ENCODE measurements at regions of chr1 and their contacts with region 1.

Region 1: GRCh38 chr1:194295685-194296084 is 1109.3 kb upstream of the B3GALT2 start:
- DNase-seq: no peak
- ATAC-seq: peak; percentile 64

Region 2: GRCh38 chr1:193143285-193143684 is 1152.4 kb before region 1 on chr1:
- intact Hi-C with region 1: loop called (anchors 10 kb)
- DNase-seq: no peak
- ATAC-seq: no peak

Region 3: GRCh38 chr1:193406901-193407300 is 888.8 kb before region 1 on chr1:
- intact Hi-C with region 1: loop called (anchors 10 kb)
- DNase-seq: no peak
- ATAC-seq: no peak

Region 4: GRCh38 chr1:193498088-193498655 is 797.5 kb before region 1 on chr1:
- intact Hi-C with region 1: no loop called
- DNase-seq: no peak
- ATAC-seq: no peak

Region 5: DNA sequence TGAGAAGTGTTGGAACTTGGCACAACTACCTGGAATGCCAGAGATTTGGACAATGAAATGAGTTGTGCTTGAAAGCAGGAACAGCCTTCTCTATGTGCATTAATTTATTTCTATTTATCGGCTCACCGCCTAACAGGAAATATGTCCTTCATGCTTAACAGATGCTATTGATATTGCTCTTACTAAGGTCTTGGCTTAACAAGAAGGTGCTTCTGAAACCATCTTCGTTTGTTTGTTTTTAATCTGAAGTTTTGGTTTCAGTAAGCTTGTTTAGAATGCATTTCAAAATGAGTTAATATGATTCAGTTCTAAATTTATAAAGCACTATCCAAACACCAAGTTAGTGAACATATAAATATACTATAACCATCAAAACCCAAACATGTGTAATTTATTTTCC is 210.9 kb before region 1 on chr1:
- intact Hi-C with region 1: no loop called
- DNase-seq: no peak
- ATAC-seq: no peak

Region 6: GRCh38 chr1:194338241-194338948 is 42.7 kb after region 1 on chr1:
- intact Hi-C with region 1: no loop called
- DNase-seq: no peak
- ATAC-seq: no peak